MCF 10A (cell line): ENCODE measurements at regions of chr1 and their contacts with region 1.

Region 1: GRCh38 chr1:208988811-208989222 is 594.7 kb upstream of the CAMK1G start:
- DNase-seq: peak; percentile 90
- H3K4me3 Mint-ChIP-seq: peak overlapping the region; percentile 57
- H3K27ac Mint-ChIP-seq: peak overlapping the region; percentile 62
- H3K4me1 Mint-ChIP-seq: peaks cover 39% of the 10 kb centered on the region
- H3K27me3 Mint-ChIP-seq: no peaks in the 10 kb centered on the region
- CTCF ChIP-seq: no peak

Region 2: DNA sequence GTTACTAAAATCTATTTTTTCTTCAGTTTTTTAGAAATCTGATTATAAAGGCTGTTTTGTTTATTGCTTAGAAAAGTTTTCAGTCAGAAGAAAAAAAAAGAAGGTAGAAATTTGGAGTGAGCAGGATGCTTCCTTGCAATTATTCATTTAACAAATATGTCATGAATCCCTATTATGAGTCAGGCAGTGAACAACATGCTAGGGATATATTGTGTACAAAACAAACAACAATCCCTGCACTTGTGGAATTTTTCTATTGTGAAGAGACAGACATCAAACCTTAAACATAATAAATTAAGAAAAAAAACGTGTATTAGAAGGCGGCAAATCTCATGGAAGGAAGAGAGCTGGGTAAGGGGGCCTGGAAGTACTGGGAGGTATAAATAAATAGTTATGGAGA is 69.4 kb before region 1 on chr1:
- CTCF ChIA-PET with region 1: no interaction called
- POLR2A ChIA-PET with region 1: interaction called, 5 read pairs
- intact Hi-C with region 1: loop called (anchors 5 kb)
- DNase-seq: peak; percentile 52
- H3K4me3 Mint-ChIP-seq: no peak overlapping the region
- H3K27ac Mint-ChIP-seq: peak overlapping the region; percentile 86
- H3K4me1 Mint-ChIP-seq: peaks cover 32% of the 10 kb centered on the region
- H3K27me3 Mint-ChIP-seq: no peaks in the 10 kb centered on the region
- CTCF ChIP-seq: no peak